SK-N-SH (cell line): ENCODE measurements at regions of chr1 and their contacts with region 1.

Region 1: DNA sequence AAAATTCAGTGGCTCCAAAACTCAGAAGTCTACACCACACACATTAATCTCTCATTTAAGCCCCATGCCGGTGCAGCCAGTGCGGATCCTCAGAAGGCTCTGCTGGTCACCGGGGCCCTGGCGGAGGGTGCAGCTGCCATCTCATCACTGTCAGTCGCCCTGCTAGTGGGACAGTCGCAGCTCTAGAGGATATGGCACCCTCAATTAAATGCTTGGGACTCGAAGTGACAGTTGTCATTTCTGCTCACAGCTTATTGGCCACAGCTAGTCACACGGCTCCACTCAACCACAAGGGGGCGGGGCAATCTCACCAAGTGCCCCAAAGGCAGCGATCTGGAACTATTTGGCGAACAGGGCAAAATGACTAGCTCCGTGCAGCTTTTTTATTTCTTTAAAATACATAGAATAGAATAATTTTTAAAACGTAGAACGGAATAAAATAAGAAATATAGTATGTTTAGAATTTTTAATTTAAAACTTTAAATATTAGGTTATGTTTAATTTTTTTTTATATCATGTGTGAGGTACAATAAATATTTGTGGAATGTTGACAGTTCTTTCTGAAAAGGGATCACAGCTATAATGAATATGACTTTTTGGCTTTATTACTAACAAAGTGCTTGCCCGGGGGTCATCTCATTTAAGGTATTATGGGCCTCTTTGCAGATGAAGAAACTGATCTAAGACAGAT is 8.0 kb upstream of the MAN1C1 start:
- DNase-seq: peak; percentile 85
- H3K4me3 ChIP-seq: peak overlapping the region; percentile 39 to 57; a peak in 3 of 4 replicates
- H3K27ac ChIP-seq: no peak overlapping the region
- H3K4me1 ChIP-seq: peaks cover 0 to 13% of the 10 kb centered on the region in 2 experiments; a peak in 1 of 4 replicates
- H3K27me3 ChIP-seq: peaks cover 29% of the 10 kb centered on the region
- CTCF ChIP-seq: peak; percentile 60
- EP300 ChIP-seq: no peak
- RAD21 ChIP-seq: peak; percentile 82

Region 2: DNA sequence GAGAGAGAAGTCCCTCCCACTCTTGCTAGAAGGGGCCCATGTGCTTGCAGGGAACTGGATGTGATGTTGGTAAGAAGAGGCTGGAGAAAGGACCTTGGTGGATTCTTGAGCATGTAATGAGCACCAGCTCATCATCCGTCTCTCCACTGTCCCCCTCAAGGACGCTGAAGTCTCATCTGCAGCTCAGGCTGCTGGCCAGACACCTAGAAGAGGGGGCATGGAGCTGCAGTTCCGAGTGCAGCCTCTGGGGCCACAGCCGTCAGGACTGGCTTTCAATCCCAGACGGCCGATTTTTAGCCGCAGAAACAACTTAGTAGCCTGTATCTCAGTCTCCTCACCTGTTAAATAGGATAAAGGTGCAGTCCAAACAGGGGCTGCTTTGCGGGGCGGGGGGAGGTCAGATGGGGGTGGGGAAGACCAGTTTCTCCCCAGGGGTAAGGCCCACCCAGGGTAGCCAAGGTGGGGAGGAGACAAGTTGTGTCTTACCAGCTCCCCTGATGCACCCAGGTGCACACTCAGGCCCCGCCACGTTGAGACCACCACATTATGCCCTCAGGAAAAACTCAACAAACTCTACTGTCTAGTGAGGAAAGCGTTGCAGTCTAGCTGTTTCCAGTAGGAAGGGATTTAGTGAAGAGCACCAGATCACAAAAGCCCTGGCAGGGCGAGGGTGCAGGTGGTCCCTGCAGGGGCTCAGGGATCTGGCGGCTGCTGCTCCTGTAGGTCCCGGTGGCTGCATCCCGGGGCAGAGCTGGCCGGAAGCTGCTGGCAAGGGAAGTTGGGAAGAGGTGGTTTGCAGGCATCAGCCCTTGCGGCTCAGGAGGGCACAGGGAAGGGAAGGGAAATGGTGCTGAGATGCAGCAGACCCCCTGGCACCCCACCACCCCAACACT is 35.7 kb before region 1 on chr1:
- CTCF ChIA-PET with region 1: interaction called, 11 read pairs
- POLR2A ChIA-PET with region 1: no interaction called
- DNase-seq: peak; percentile 85
- H3K4me3 ChIP-seq: no peak overlapping the region
- H3K27ac ChIP-seq: no peak overlapping the region
- H3K4me1 ChIP-seq: peaks cover 9 to 11% of the 10 kb centered on the region in 2 experiments; a peak in 3 of 4 replicates
- H3K27me3 ChIP-seq: no peaks in the 10 kb centered on the region
- CTCF ChIP-seq: peak; percentile 61
- EP300 ChIP-seq: no peak
- RAD21 ChIP-seq: peak; percentile 38

Region 3: DNA sequence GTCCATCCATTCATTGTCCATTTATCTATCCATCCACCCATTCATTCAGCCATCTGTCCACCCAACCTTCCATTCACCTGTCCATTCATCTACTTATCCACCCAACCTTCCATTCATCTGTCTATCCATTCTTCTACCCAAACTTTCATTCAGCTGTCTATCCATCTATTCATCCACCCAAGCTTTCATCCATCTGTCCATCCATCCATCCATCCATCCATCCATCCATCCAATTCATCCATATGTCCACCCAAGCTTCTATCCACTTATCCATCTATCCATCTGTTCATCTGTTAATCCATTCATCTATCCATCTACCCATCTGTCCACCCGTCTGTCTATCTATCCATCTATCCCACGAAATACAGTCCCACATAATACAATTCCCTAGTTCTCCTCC is 13.7 kb before region 1 on chr1:
- CTCF ChIA-PET with region 1: interaction called, 12 read pairs
- POLR2A ChIA-PET with region 1: no interaction called
- DNase-seq: no peak
- H3K4me3 ChIP-seq: no peak overlapping the region
- H3K27ac ChIP-seq: no peak overlapping the region
- H3K4me1 ChIP-seq: no peaks in the 10 kb centered on the region
- H3K27me3 ChIP-seq: no peaks in the 10 kb centered on the region
- CTCF ChIP-seq: no peak
- EP300 ChIP-seq: no peak
- RAD21 ChIP-seq: no peak

Region 4: DNA sequence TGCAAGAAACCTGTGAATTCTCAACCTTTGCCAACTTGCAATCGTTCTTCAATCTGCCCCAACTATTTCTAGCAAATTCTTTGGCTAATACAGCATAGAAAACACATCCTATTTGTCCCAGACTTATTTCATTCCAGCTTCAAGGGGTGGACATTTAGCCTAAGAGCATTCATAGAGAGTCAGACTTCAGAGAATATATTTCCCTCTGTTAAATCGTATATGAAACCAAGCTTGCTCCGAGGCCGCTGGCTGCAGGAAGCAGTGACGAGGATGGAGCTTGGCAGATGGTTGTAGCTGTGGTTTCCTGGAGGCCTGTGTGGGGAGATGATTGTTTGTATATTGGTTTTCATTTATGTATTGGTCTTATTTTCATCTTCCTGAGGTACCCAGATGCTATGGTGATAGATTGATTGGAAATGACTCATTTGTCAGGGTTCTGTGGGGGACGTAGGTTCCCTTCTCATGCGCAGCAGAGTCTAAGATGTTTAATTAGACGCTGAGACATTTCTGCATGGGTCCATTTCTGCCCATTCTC is 34.0 kb after region 1 on chr1:
- CTCF ChIA-PET with region 1: no interaction called
- POLR2A ChIA-PET with region 1: no interaction called
- DNase-seq: no peak
- H3K4me3 ChIP-seq: no peak overlapping the region
- H3K27ac ChIP-seq: no peak overlapping the region
- H3K4me1 ChIP-seq: no peaks in the 10 kb centered on the region; a peak in 1 of 4 replicates
- H3K27me3 ChIP-seq: peaks cover 26% of the 10 kb centered on the region; the same call in 1 of the 2 replicates
- CTCF ChIP-seq: no peak
- EP300 ChIP-seq: no peak
- RAD21 ChIP-seq: no peak

Region 5: DNA sequence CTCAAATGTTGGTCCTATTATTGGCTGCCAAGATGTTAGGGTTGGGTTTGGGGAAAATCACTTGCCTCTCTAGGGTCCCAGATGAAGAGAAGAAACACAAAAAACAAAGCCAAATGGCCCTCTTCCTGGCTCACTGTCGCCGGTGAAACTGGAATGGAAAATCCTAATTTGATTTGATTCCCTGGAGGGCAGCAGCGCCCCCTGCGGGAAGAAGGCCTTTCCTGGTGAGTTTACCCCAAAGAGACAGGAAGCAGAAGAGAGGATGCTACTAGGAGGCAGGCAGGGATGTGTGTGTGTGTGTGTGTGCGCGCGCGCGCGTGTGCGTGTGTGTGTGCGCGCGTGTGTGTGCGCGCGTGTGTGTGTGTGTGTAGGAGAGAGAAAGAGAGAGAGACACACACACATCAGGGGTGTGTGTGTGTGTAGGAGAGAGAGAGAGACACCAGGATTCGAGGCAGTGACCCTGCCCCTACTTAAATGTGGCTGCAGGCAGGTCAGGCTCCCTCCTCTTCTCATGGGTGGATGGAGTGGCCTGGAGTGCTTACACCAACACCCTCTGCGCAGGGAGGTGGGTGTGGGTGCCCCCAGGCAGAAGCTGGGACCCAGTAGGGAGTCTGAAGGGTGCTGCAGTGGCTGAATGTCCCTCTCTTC is 188.3 kb after region 1 on chr1:
- CTCF ChIA-PET with region 1: interaction called, 24 read pairs
- POLR2A ChIA-PET with region 1: interaction called, 7 read pairs
- DNase-seq: peak; percentile 71
- H3K4me3 ChIP-seq: peak overlapping the region in 1 of 2 experiments; percentile 26; a peak in 1 of 4 replicates
- H3K27ac ChIP-seq: no peak overlapping the region
- H3K4me1 ChIP-seq: peaks cover 0 to 27% of the 10 kb centered on the region in 2 experiments; a peak in 2 of 4 replicates
- H3K27me3 ChIP-seq: no peaks in the 10 kb centered on the region
- CTCF ChIP-seq: peak; percentile 78
- EP300 ChIP-seq: no peak
- RAD21 ChIP-seq: peak; percentile 74

Region 6: DNA sequence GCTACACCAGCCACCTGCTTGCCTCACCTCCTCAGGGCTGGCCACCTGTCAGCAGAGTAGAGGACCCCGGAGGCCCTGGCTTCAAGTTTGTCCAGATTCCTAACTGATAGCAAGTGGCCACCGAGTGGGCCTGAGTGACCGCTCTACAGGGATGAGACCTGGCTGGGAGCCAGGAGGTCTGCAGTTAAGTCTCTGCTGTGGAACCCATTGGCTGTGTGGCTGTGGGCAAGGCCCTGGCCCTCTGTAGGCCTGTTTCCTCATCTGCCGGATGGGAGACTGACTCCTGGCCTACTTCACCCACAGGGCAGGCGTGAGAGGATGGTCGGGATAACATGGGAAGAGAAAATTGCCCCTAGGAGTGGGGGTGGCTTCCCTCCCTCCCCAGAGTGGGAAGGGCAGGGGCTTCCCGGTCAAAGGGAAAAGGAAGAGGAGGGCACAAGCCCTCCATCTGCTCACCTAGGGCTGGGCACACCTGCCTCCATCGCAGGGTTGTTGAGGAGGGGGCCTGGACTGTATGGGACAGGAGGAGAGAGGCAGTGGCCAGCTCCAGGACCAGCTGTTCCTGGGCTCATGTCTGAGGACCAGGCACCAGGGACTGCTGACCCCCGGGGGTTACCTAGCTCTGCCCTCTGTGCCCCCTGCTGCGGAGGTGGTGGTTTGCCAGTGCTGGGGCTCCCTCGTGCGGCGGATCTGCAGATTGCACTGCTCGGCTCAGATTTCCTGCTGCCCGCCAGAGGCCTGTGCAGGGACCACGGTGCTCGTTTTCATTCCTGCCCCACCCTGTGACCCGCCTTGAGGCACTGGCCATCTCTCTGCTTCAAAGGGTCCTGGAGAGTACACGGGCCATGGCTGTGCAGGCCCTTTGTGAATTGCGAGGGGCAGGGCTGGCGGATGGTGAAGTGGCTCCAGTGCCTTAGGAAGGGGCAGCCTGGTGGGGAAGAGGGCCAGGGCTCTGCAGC is 202.0 kb after region 1 on chr1:
- CTCF ChIA-PET with region 1: interaction called, 76 read pairs
- POLR2A ChIA-PET with region 1: interaction called, 4 read pairs
- DNase-seq: peak; percentile 90
- H3K4me3 ChIP-seq: no peak overlapping the region; a peak in 1 of 4 replicates
- H3K27ac ChIP-seq: peak overlapping the region in 1 of 2 experiments; percentile 24; a peak in 1 of 4 replicates
- H3K4me1 ChIP-seq: peaks cover 0 to 16% of the 10 kb centered on the region in 2 experiments; a peak in 1 of 4 replicates
- H3K27me3 ChIP-seq: no peaks in the 10 kb centered on the region
- CTCF ChIP-seq: peak; percentile 90
- EP300 ChIP-seq: no peak
- RAD21 ChIP-seq: peak; percentile 91